ENCODE measurements at regions of chr3 and their contacts with region 1.

Region 1: DNA sequence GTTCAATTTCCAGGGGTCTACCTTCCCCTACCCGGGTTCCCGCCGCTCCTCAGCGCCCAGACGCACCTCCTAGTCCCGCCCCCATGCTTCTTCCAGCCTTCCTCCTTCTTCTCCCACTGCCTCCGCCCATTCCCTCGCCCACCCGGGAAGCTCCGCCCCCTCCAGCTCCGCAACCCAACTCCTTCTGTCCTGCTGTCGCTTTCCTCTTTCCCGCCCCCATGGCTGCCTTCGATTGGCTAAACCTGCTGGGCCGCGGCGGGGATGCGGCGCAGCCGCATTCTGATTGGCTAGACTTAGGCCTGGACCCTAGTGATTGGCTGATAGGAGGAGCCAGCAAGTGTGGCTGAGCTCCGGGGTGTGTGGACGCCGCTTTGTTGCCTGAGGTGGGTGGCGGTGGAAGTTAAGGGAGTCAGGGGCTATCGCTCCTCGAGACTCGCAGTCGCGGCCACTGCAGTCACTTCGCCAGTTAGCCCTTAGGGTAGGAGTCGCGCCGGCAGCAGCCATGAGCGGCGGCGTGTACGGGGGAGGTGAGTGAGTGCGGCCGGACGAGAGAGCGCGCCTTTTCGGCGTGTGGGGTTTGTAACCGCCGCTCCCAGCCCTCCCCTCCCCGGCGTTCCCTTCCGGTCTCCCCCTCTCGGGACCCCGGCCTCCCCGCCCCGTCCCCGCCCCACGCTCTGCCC is at the start of gene ACTL6A:
- DNase-seq: peak; percentile 99
- H3K4me3 Mint-ChIP-seq: peak within 1 kb of the TSS; percentile 98
- H3K27ac Mint-ChIP-seq: peak within 1 kb of the TSS; percentile 98
- H3K4me1 Mint-ChIP-seq: peaks cover 28% of the 10 kb centered on the region
- H3K27me3 Mint-ChIP-seq: peaks cover 2% of the 10 kb centered on the region
- total RNA-seq, gene ACTL6A: 101 to 102 TPM

Region 2: DNA sequence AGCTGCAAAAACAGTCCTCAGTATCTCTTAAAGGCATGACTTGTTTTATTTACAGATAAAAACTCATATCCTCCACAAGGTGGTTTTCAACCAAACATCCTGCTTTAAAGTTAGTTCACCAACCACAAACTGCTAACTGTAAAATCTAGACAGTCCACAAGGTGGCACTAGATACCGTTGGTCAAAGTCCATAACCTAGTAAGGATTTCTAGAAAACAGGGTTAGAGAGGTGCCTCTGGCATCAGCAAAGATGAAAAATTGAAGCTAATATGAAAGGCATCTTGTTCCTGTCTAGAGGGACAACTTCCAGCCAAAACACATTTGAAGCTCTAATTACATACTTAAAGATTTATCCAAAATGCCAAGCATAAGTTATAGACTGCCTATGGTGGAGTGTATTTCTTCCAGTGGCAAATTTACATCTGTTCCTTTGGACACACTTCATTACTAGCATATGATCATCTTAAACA is 547.1 kb before region 1 on chr3:
- CTCF ChIA-PET with region 1: interaction called, 3 read pairs
- POLR2A ChIA-PET with region 1: interaction called, 5 read pairs
- intact Hi-C with region 1: loop called (anchors 1 kb)
- DNase-seq: peak; percentile 49
- H3K4me3 Mint-ChIP-seq: no peak overlapping the region
- H3K27ac Mint-ChIP-seq: peak overlapping the region; percentile 44
- H3K4me1 Mint-ChIP-seq: peaks cover 33% of the 10 kb centered on the region
- H3K27me3 Mint-ChIP-seq: no peaks in the 10 kb centered on the region

Region 3: DNA sequence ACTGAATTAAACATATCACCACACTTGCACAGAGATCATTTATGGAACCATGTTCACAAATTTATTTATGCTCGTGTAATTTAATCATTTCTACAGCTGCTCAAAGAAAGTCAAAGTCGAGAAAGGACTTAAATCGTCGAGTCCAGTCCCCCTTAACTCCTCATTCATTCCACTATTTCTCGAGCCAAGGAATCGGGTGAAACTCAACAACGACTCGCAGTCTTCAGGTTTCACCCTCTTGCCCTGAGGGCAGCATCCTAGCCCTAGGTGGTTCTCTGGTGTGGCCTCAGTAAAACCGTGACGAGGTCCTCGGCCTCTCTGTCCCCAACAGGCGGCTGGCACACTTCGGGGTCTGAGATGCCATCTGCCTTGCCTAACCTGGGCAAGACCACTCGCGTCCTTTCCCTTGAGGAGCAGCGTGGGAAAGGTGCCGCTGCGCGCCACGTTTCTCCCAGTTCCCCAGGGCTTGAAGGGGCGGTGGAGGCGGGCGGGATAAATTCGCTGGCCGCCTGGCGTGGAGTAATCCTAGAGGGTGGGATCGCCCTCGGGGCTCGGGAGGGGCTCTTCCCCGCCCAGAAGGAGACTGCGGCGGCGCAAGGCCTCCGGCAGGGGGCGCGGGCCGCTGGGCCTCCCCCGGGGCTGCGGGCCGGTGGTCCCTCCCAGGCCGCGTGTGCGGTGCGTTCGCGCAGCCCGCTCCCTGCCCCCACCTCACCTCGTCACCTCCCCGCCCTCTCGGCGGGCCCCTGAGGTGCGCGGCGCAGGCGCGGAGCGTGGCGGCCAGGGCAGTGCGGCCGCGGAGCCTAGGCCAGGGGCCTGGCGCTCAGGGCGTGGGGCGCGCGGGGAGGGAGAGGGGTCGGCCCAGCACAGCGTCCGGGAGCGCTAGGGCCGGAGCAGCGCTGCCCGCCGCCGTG is 240.2 kb before region 1 on chr3 and contains the start of gene ZNF639:
- CTCF ChIA-PET with region 1: no interaction called
- POLR2A ChIA-PET with region 1: interaction called, 5 read pairs
- intact Hi-C with region 1: loop called (anchors 1 kb)
- DNase-seq: peak; percentile 86
- H3K4me3 Mint-ChIP-seq: peak within 1 kb of the TSS; percentile 90
- H3K27ac Mint-ChIP-seq: peak within 1 kb of the TSS; percentile 93
- H3K4me1 Mint-ChIP-seq: peaks cover 29% of the 10 kb centered on the region
- H3K27me3 Mint-ChIP-seq: no peaks in the 10 kb centered on the region
- total RNA-seq, gene ZNF639: 23.5 to 25.0 TPM

Region 4: DNA sequence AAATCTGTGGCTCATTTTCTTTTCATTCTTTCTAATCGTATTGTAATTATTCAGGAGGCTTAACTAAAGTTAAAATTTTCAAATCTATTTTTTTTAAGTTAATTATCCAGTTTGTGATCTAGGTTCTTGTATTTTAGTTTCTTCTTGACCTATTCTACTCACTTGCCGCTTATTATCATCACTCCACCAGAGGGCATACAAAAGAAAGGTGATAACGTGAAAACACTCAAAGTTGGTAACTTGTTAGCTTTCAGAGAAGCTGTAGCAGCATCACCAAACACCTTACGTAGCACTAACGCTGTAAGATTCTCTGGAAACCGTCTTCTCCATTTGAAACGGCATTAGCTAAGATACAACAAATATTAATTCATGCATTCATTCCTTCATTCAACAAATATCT is 116.2 kb before region 1 on chr3:
- CTCF ChIA-PET with region 1: interaction called, 3 read pairs
- POLR2A ChIA-PET with region 1: no interaction called
- intact Hi-C with region 1: loop called (anchors 1 kb)
- DNase-seq: no peak
- H3K4me3 Mint-ChIP-seq: no peak overlapping the region
- H3K27ac Mint-ChIP-seq: no peak overlapping the region
- H3K4me1 Mint-ChIP-seq: peaks cover 9% of the 10 kb centered on the region
- H3K27me3 Mint-ChIP-seq: peaks cover 40% of the 10 kb centered on the region

Region 5: DNA sequence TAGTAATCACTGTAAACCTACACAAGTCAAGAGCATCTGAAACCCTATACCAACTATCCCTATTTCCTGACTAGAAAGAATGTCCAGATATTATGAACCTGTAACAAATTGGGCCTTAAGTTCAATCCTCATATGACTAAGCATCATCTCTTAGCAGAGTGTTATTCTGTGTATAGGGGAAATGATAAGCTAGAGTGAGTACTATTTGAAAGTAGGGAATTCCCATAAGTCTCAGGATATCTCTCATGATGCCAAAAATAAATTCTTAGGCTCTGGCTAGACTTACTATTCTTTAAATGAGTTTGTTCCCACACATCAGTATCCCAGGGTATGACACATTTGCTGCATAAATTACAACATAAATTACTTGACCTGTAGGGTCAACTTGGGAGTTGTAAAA is 26.4 kb after region 1 on chr3:
- CTCF ChIA-PET with region 1: no interaction called
- POLR2A ChIA-PET with region 1: interaction called, 4 read pairs
- intact Hi-C with region 1: loop called (anchors 2 kb)
- DNase-seq: no peak
- H3K4me3 Mint-ChIP-seq: no peak overlapping the region
- H3K27ac Mint-ChIP-seq: peak overlapping the region; percentile 50
- H3K4me1 Mint-ChIP-seq: peaks cover 10% of the 10 kb centered on the region
- H3K27me3 Mint-ChIP-seq: no peaks in the 10 kb centered on the region

Region 6: GRCh38 chr3:179653096-179653797 is 90.5 kb after region 1 on chr3:
- CTCF ChIA-PET with region 1: interaction called, 3 read pairs
- POLR2A ChIA-PET with region 1: interaction called, 3 read pairs
- intact Hi-C with region 1: loop called (anchors 1 kb)
- DNase-seq: peak; percentile 73
- H3K4me3 Mint-ChIP-seq: peak overlapping the region; percentile 90
- H3K27ac Mint-ChIP-seq: peak overlapping the region; percentile 71
- H3K4me1 Mint-ChIP-seq: peaks cover 27% of the 10 kb centered on the region
- H3K27me3 Mint-ChIP-seq: peaks cover 1% of the 10 kb centered on the region

Measured in activated CD4-positive, alpha-beta memory T cell treated with anti-CD3 and anti-CD28 coated beads for 36 hours (primary cell).